Aorta (tissue), 5 donors: ENCODE measurements at regions of chr15 and their contacts with region 1.

Region 1: DNA sequence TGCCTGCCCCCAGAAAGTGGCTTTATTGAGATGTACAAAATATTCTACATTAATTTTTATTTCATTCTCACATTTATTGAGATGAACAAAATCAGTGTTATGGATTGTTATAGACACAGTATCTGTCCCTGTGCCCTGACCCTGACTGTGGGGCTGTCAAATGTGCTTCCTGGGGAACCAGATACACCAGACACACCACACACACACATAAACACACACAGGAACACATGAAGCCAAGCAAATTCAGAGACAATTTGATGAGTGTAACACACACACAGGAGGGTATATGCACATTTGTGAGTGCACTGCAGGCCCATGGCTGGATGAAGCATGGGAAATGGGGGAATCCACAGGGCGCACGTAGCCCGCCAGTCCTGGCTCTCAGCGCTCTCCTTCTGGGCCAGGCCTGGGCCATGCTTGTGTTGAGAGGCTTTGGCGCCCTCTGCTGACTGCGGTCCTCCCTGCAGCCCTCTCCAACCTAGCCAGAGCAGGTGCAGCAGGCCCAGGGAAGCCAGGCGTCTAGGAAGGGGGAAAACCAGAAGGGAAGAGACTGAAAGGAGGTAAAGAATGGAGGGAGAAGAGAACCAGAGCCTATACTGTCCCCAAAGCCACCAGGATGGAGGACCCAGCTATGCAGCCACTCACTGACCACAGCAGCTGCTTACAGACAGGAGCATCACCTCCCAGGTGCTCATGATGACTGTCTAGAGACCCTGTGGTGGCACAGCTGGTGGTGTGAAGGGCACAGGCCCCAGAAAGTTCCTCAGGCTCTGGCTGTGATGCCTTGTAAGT is 18.0 kb upstream of the LOXL1 start:
- DNase-seq: peak; percentile 87 to 96
- ATAC-seq: peak; percentile 91
- H3K4me3 ChIP-seq: no peak overlapping the region
- H3K27ac ChIP-seq: no peak overlapping the region
- H3K4me1 ChIP-seq: no peaks in the 10 kb centered on the region
- H3K27me3 ChIP-seq: no peaks in the 10 kb centered on the region

Region 2: DNA sequence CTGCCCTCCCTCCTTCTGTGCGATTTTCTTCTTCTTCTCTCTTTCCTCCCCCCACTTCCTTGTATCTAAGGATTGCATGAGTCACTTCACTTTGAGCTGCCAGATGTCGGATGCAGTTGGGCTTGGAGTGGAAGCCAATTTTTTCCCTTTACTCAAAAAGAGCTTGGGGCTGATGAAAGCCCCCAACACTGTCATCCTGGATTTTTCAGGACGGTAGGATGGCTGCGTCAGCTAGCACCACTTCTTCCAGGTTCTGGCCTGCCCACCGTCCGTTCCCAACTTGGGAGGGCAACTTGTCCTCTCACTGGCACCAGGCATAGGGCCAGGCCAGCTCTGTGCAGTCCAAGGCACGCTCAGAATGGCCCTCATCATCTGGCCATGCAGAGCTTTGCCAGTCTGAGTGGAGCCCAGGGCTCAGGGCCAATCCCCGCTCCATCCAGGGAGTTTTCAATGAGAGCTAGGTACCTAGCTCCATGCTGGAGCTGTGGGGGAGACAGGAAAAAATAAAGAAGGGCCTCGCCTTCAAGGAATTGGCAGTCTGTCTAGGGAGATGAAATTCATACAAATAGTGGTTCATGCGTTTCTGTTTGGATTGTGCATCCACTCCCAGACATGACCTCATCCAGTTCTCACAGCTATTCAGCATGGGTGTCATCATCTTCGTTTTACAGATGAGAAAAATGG is 107.4 kb before region 1 on chr15:
- intact Hi-C with region 1: loop called in 1 of 2 experiments (anchors 10 kb)
- DNase-seq: peak; percentile 79 to 89
- ATAC-seq: peak; percentile 71
- H3K4me3 ChIP-seq: no peak overlapping the region
- H3K27ac ChIP-seq: peak overlapping the region; percentile 71 to 94
- H3K4me1 ChIP-seq: peaks cover 0 to 10% of the 10 kb centered on the region in 2 donors
- H3K27me3 ChIP-seq: no peaks in the 10 kb centered on the region

Region 3: DNA sequence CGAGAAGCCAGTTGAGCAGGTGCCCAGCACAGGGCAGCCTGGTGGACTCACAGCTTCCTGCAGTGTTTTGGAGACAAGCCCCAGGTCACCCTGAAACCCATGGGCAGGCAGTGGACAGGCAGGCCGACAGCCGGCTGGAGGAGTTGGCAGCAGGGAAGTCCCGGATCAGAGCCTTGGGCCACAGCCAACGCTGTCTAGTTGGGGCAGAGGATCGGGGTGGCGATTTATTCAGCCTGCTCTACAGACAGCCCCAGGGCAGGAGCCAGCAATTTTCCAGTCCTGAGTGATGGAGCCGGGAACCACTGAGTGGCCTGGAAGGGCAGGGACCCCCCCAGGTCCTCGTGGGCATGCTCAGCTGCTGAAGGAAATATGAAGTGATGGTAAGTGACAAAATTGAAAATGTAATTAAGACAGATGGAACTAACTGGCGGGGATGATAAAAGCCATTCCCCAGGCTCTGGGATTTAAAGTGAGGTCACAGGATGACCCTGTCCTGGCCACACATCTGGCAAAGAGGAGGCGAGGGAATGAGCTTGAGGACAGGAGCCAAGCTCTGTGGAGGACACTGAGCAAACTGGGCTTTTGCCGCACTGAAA is 69.3 kb before region 1 on chr15:
- intact Hi-C with region 1: no loop called
- DNase-seq: peak; percentile 63 to 82
- ATAC-seq: peak; percentile 11
- H3K4me3 ChIP-seq: no peak overlapping the region
- H3K27ac ChIP-seq: no peak overlapping the region
- H3K4me1 ChIP-seq: no peaks in the 10 kb centered on the region
- H3K27me3 ChIP-seq: no peaks in the 10 kb centered on the region

Region 4: GRCh38 chr15:73873889-73874511 is 34.2 kb before region 1 on chr15:
- intact Hi-C with region 1: loop called in 1 of 2 experiments (anchors 2 kb)
- DNase-seq: no peak
- ATAC-seq: no peak
- H3K4me3 ChIP-seq: no peak overlapping the region
- H3K27ac ChIP-seq: no peak overlapping the region
- H3K4me1 ChIP-seq: no peaks in the 10 kb centered on the region
- H3K27me3 ChIP-seq: no peaks in the 10 kb centered on the region

Region 5: DNA sequence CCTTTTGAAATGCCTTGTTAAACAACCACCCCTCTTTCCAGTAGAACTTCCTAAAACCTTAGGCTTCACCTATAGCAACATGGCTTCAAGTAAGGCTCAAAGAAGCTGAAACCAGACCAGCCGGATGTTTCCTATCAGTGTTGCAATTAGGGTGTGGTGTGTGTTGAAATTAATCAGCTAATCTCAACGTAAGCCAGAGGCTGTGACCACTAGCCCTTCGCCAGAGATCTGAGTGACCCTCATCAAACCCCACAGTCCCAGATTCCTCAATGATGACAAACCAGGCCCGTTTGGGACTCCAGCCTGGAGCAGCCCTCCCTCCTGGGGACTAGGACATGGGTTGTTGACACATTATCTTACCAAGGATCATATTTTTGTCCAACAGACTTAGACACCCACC is 431.9 kb after region 1 on chr15:
- intact Hi-C with region 1: no loop called
- DNase-seq: peak in 1 of 2 donors; percentile 11
- ATAC-seq: no peak
- H3K4me3 ChIP-seq: no peak overlapping the region
- H3K27ac ChIP-seq: no peak overlapping the region
- H3K4me1 ChIP-seq: no peaks in the 10 kb centered on the region
- H3K27me3 ChIP-seq: no peaks in the 10 kb centered on the region